MCF 10A (cell line): ENCODE measurements at regions of chr2 and their contacts with region 1.

Region 1: DNA sequence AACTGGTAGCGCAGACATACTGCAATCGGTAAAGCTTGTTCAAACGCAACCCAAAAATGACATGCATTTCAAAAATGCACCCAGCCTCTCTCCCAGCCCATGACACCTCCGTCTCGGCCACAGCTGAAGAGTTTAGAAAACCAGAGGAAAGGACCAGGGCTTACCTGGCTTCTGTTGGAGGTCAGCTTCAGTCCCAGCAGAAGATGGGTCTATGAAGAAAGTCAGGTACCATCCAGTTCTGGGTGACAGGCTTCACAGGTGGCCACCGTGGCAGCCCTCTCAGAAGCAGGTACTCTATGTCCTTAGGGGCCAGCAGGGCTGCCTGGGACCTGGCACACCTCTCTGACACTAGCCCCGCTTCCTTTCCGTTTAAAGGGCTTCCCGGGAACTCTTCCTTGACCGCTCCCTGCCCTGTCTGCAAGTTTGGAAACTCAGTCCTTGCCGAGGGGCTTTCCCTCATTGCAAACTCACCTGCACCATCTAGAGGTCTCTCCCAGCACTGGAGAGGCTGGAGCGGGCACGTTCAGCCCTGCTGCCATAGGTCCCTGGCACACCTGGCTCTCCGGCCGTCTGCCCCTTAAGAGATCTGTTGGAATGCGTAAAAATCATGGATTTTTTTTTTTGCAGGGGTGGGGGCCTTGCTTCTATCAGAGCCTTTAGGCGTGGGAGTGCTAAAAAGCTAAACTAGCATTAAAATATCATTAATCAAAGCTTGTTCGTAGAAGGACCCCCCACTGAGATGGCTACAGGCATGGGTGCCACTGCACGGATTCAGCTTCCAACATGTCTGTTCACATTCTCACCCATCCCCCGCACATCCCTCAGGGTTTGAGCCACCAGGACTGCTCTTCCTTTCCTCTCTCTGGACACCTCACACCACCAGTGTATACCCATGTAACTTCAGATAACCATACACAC is at the start of gene EDAR:
- DNase-seq: peak; percentile 80
- H3K4me3 Mint-ChIP-seq: peak within 1 kb of the TSS; percentile 55
- H3K27ac Mint-ChIP-seq: no peak within 1 kb of the TSS
- H3K4me1 Mint-ChIP-seq: peaks cover 26% of the 10 kb centered on the region
- H3K27me3 Mint-ChIP-seq: peaks cover 11% of the 10 kb centered on the region
- CTCF ChIP-seq: peak; percentile 83
- total RNA-seq, gene EDAR: 0.14 and 0.37 TPM in 2 replicates

Region 2: GRCh38 chr2:108855194-108855593 is 133.9 kb before region 1 on chr2:
- CTCF ChIA-PET with region 1: interaction called, 39 read pairs
- POLR2A ChIA-PET with region 1: interaction called, 4 read pairs
- intact Hi-C with region 1: loop called (anchors 1 kb)
- DNase-seq: peak; percentile 42
- H3K4me3 Mint-ChIP-seq: no peak overlapping the region
- H3K27ac Mint-ChIP-seq: no peak overlapping the region
- H3K4me1 Mint-ChIP-seq: no peaks in the 10 kb centered on the region
- H3K27me3 Mint-ChIP-seq: no peaks in the 10 kb centered on the region
- CTCF ChIP-seq: peak; percentile 30

Region 3: DNA sequence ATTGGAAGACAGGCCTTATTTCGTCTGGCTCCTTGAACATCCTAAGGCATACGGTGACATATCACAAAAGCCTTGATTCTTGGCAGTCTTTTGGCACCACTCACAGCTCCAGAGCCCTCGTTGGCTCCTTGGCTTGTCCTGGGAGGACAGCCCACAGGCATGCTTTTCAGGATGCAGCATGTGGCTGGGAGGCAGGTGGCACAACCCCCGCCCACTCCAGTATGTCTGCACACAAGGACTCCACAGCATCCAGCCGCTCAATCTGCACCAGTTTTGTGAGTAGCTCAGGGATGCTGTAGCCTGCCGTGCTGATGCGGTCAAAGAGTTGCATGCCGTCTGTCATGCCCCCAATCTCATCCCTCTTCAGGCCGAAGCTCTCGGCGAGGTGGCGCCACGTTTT is 92.3 kb before region 1 on chr2:
- CTCF ChIA-PET with region 1: interaction called, 13 read pairs
- POLR2A ChIA-PET with region 1: no interaction called
- intact Hi-C with region 1: no loop called
- DNase-seq: no peak
- H3K4me3 Mint-ChIP-seq: no peak overlapping the region
- H3K27ac Mint-ChIP-seq: no peak overlapping the region
- H3K4me1 Mint-ChIP-seq: no peaks in the 10 kb centered on the region
- H3K27me3 Mint-ChIP-seq: no peaks in the 10 kb centered on the region
- CTCF ChIP-seq: no peak

Region 4: GRCh38 chr2:108971661-108972566 is 17.1 kb before region 1 on chr2:
- CTCF ChIA-PET with region 1: interaction called, 19 read pairs
- POLR2A ChIA-PET with region 1: interaction called, 4 read pairs
- intact Hi-C with region 1: no loop called
- DNase-seq: peak; percentile 95
- H3K4me3 Mint-ChIP-seq: peak overlapping the region; percentile 52
- H3K27ac Mint-ChIP-seq: peak overlapping the region; percentile 71
- H3K4me1 Mint-ChIP-seq: peaks cover 49% of the 10 kb centered on the region
- H3K27me3 Mint-ChIP-seq: no peaks in the 10 kb centered on the region
- CTCF ChIP-seq: no peak

Region 5: DNA sequence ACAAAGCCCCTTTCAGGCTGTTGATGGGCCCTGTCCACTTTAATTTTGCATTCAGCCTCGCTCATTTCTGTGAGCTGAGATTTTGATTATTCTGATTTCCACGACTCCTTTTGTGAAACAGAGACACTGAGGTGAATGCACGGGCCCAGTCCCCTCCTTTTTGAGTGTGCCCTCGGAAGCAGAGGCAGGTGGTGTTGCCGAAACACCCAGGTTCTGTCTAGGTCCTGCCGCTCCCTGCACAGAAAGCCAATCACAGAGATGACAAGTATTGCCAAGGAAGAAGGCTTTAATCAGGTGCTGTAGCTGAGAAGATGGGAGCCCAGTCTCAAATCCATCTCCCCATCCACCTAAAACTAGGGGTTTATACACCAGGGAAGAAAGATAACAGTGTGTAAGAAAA is 44.1 kb after region 1 on chr2:
- CTCF ChIA-PET with region 1: no interaction called
- POLR2A ChIA-PET with region 1: no interaction called
- intact Hi-C with region 1: no loop called
- DNase-seq: no peak
- H3K4me3 Mint-ChIP-seq: no peak overlapping the region
- H3K27ac Mint-ChIP-seq: no peak overlapping the region
- H3K4me1 Mint-ChIP-seq: no peaks in the 10 kb centered on the region
- H3K27me3 Mint-ChIP-seq: no peaks in the 10 kb centered on the region
- CTCF ChIP-seq: no peak